ENCODE measurements at regions of chrX and their contacts with region 1.

Region 1: DNA sequence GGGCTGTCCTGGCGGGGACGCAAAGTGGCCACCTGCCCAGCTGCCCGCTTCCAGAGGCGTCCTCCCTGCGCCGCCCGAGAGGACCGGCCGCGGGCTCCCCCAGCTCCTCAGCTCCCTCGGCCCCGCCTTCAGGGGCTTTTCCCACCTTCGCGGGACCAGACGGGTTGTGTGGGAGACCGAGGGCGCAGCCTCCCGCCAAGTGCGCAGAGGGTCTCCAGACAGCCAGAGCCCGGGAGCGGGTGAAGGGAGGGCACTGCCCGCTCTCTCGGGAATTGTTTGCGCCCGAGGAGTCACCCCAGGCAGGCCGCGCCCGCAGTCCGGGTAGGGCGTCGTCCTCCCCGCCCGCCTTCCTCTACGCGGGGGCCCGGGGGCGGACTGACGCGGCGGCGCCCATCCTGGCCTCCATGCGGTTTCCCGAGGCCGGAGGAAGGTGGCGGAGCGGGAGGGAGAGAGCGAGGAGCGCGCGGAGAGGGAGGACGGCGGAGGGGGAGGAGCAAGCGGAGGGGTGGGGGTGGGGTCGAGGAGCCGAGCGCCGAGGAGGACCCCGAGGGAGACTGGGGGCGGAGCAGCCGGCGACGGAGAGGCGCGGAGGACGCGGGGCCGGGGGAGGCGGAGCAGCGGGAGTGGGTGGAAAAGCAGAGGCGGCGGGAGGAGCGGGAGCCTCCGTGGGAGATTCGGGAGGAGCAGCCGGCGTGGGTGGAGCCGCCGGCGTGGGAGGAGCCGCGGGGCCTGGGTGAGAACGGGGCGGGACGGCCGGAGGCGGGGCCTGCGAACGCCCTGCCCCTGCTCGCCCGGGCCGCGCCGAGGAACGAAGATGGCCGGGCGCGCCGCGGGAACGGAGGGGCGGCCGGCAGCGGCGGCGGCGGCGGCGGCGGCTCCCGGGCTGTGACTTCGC is 47.6 kb downstream of the CLDN34 start:
- DNase-seq: peak; percentile 83
- ATAC-seq: peak; percentile 89
- H3K4me3 Mint-ChIP-seq: peak overlapping the region; percentile 60
- H3K27ac Mint-ChIP-seq: peak overlapping the region; percentile 58
- H3K4me1 Mint-ChIP-seq: peaks cover 37% of the 10 kb centered on the region
- H3K27me3 Mint-ChIP-seq: peaks cover 6% of the 10 kb centered on the region

Region 2: DNA sequence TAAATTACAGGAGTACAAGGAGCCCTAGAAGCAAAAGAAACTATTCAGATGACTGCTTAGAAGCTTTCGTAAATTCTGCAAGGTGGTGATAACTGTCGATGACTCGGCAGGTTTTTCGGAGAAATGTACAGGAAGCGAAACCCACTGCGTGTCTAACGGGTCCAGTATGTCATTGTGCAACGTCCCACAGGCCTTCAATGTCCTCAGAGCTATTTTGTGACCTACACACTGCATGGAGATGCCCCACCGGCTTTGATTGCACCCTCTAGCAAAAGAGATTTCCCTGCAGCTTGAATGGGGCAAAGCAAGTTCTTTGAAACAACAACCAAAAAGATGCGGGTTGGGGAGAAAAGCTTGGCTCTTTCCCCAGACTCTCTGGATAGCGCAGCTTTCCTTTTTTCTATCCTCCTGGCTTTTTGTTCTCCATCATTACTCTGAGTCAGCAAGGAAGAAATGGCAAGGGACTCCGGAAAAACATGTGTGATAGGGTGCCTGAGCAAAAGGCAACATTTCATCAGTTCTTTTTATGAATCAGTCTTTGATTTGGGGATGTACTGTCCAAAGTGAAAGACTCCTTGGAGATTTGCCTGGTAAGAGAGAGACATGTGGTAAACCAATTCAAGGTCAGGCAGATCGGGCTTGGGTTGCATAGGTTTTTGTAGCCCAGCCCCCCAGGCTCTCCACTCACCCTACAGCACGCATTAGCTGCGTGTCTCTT is 661.9 kb before region 1 on chrX:
- CTCF ChIA-PET with region 1: no interaction called
- POLR2A ChIA-PET with region 1: no interaction called
- intact Hi-C with region 1: loop called in 1 of 2 experiments (anchors 10 kb)
- DNase-seq: peak; percentile 64
- ATAC-seq: peak; percentile 47
- H3K4me3 Mint-ChIP-seq: peak overlapping the region; percentile 23
- H3K27ac Mint-ChIP-seq: peak overlapping the region; percentile 77
- H3K4me1 Mint-ChIP-seq: peaks cover 31% of the 10 kb centered on the region
- H3K27me3 Mint-ChIP-seq: no peaks in the 10 kb centered on the region

Region 3: DNA sequence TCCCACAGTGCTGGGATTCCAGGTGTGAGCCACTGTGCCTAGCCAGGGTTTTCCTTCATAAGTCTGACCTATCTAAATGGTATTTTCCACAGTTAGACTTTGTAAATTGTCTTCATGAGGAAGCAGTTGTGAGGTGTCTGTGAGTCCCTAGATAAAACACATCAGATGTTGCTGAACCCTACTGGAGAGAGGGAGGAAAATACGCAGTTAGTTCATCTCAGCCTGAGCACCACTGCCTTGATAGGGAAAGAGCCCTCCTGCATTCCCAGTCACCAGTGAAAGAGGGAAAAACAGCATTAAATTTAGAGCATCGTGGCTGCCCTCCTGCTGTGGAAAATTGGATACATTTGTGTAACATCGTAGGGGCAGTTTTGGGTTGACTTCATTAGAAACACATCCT is 79.3 kb before region 1 on chrX:
- CTCF ChIA-PET with region 1: no interaction called
- POLR2A ChIA-PET with region 1: no interaction called
- intact Hi-C with region 1: no loop called
- DNase-seq: no peak
- ATAC-seq: no peak
- H3K4me3 Mint-ChIP-seq: no peak overlapping the region
- H3K27ac Mint-ChIP-seq: no peak overlapping the region
- H3K4me1 Mint-ChIP-seq: peaks cover 1% of the 10 kb centered on the region
- H3K27me3 Mint-ChIP-seq: peaks cover 9% of the 10 kb centered on the region

Region 4: GRCh38 chrX:10083809-10084208 is 69.1 kb after region 1 on chrX:
- CTCF ChIA-PET with region 1: interaction called, 3 read pairs
- POLR2A ChIA-PET with region 1: no interaction called
- intact Hi-C with region 1: loop called in 1 of 2 experiments (anchors 5 kb)
- DNase-seq: no peak
- ATAC-seq: no peak
- H3K4me3 Mint-ChIP-seq: no peak overlapping the region
- H3K27ac Mint-ChIP-seq: no peak overlapping the region
- H3K4me1 Mint-ChIP-seq: peaks cover 35% of the 10 kb centered on the region
- H3K27me3 Mint-ChIP-seq: no peaks in the 10 kb centered on the region

Region 5: GRCh38 chrX:10098270-10098713 is 83.6 kb after region 1 on chrX:
- CTCF ChIA-PET with region 1: interaction called, 3 read pairs
- POLR2A ChIA-PET with region 1: no interaction called
- intact Hi-C with region 1: loop called (anchors 1 to 5 kb)
- DNase-seq: peak; percentile 81
- ATAC-seq: peak; percentile 71
- H3K4me3 Mint-ChIP-seq: peak overlapping the region; percentile 67
- H3K27ac Mint-ChIP-seq: peak overlapping the region; percentile 94
- H3K4me1 Mint-ChIP-seq: peaks cover 49% of the 10 kb centered on the region
- H3K27me3 Mint-ChIP-seq: no peaks in the 10 kb centered on the region

Region 6: GRCh38 chrX:11111038-11111851 is 1096.5 kb after region 1 on chrX and contains the start of gene HCCS:
- CTCF ChIA-PET with region 1: no interaction called
- POLR2A ChIA-PET with region 1: no interaction called
- intact Hi-C with region 1: loop called in 1 of 2 experiments (anchors 2 kb)
- DNase-seq: peak; percentile 88
- ATAC-seq: peak; percentile 92
- H3K4me3 Mint-ChIP-seq: no peak within 1 kb of the TSS
- H3K27ac Mint-ChIP-seq: peak within 1 kb of the TSS; percentile 95
- H3K4me1 Mint-ChIP-seq: peaks cover 22% of the 10 kb centered on the region
- H3K27me3 Mint-ChIP-seq: no peaks in the 10 kb centered on the region
- total RNA-seq, gene HCCS: 24.4 to 24.7 TPM

Region 7: GRCh38 chrX:11758400-11759171 is 1743.9 kb after region 1 on chrX:
- CTCF ChIA-PET with region 1: no interaction called
- POLR2A ChIA-PET with region 1: no interaction called
- intact Hi-C with region 1: loop called in 1 of 2 experiments (anchors 10 kb)
- DNase-seq: peak; percentile 93
- ATAC-seq: peak; percentile 57
- H3K4me3 Mint-ChIP-seq: peak overlapping the region; percentile 94
- H3K27ac Mint-ChIP-seq: peak overlapping the region; percentile 96
- H3K4me1 Mint-ChIP-seq: peaks cover 14% of the 10 kb centered on the region
- H3K27me3 Mint-ChIP-seq: no peaks in the 10 kb centered on the region